MCF 10A (cell line): ENCODE measurements at regions of chr5 and their contacts with region 1.

Region 1: GRCh38 chr5:148730943-148731861 is 76.9 kb upstream of the HTR4 start:
- DNase-seq: peak; percentile 95
- H3K4me3 Mint-ChIP-seq: no peak overlapping the region
- H3K27ac Mint-ChIP-seq: peak overlapping the region; percentile 62
- H3K4me1 Mint-ChIP-seq: peaks cover 52% of the 10 kb centered on the region
- H3K27me3 Mint-ChIP-seq: no peaks in the 10 kb centered on the region
- CTCF ChIP-seq: peak; percentile 99

Region 2: GRCh38 chr5:148186248-148186996 is 544.8 kb before region 1 on chr5:
- CTCF ChIA-PET with region 1: interaction called, 12 read pairs
- POLR2A ChIA-PET with region 1: no interaction called
- intact Hi-C with region 1: no loop called
- DNase-seq: peak; percentile 94
- H3K4me3 Mint-ChIP-seq: no peak overlapping the region
- H3K27ac Mint-ChIP-seq: peak overlapping the region; percentile 75
- H3K4me1 Mint-ChIP-seq: peaks cover 7% of the 10 kb centered on the region
- H3K27me3 Mint-ChIP-seq: no peaks in the 10 kb centered on the region
- CTCF ChIP-seq: no peak

Region 3: GRCh38 chr5:148416921-148417320 is 314.3 kb before region 1 on chr5:
- CTCF ChIA-PET with region 1: interaction called, 75 read pairs
- POLR2A ChIA-PET with region 1: interaction called, 4 read pairs
- intact Hi-C with region 1: no loop called
- DNase-seq: peak; percentile 91
- H3K4me3 Mint-ChIP-seq: no peak overlapping the region
- H3K27ac Mint-ChIP-seq: peak overlapping the region; percentile 53
- H3K4me1 Mint-ChIP-seq: no peaks in the 10 kb centered on the region
- H3K27me3 Mint-ChIP-seq: no peaks in the 10 kb centered on the region
- CTCF ChIP-seq: no peak

Region 4: DNA sequence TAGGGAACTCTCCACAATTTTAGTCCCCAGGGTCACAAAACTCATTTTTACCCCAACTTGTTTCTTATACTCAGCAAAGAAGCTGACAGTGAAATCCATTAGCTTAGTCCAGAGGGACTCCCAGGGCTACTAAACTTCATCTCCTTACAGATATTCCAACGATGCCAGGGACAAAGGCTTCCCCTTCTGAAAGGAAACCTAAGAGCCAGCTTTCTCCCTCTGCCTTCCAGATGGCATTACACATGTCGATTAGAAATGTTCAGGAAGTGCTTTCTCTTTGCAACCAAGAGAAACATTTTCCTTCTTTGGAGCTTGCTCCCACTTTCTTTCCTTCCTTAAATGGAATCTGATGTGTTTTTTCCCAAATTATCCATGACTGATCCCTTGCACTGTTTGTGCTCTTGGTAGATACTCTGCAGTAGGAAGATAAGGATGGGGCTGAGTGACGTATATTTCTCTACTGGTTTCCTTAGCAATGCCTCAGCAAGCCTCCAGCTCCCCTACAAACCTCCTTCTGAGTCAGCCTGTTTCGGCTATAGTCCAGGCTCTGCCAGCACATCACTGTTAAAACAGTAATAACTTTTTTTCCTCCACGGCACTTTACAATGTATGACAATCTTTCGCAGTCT is 33.9 kb before region 1 on chr5:
- CTCF ChIA-PET with region 1: interaction called, 15 read pairs
- POLR2A ChIA-PET with region 1: no interaction called
- intact Hi-C with region 1: no loop called
- DNase-seq: peak; percentile 53
- H3K4me3 Mint-ChIP-seq: no peak overlapping the region
- H3K27ac Mint-ChIP-seq: no peak overlapping the region
- H3K4me1 Mint-ChIP-seq: no peaks in the 10 kb centered on the region
- H3K27me3 Mint-ChIP-seq: peaks cover 12% of the 10 kb centered on the region
- CTCF ChIP-seq: no peak

Region 5: GRCh38 chr5:148912714-148913398 is 181.7 kb after region 1 on chr5:
- CTCF ChIA-PET with region 1: interaction called, 26 read pairs
- POLR2A ChIA-PET with region 1: interaction called, 4 read pairs
- intact Hi-C with region 1: no loop called
- DNase-seq: peak; percentile 98
- H3K4me3 Mint-ChIP-seq: peak overlapping the region; percentile 1
- H3K27ac Mint-ChIP-seq: peak overlapping the region; percentile 76
- H3K4me1 Mint-ChIP-seq: peaks cover 68% of the 10 kb centered on the region
- H3K27me3 Mint-ChIP-seq: no peaks in the 10 kb centered on the region
- CTCF ChIP-seq: peak; percentile 75

Region 6: DNA sequence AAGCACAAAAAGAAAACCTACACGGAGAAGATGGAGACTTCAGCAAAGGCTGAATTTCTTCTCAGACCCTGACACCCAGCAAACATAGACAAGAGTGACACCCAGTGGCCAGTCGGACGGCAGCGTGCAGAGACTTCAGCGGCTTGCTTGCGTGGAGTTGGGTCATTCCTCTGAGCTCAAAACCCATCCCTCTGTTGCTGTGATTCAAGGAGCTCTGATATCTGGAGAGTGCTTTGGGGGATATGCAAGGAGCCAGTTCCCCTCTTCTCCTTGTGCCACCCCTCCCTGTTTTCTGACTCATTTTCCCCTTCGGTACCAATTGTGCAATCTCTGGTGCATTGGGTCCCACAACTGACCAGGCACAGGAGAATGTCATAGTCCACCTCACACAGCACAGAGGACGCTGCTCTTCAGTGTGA is 304.2 kb after region 1 on chr5:
- CTCF ChIA-PET with region 1: interaction called, 882 read pairs
- POLR2A ChIA-PET with region 1: interaction called, 5 read pairs
- intact Hi-C with region 1: loop called (anchors 1 kb)
- DNase-seq: peak; percentile 87
- H3K4me3 Mint-ChIP-seq: no peak overlapping the region
- H3K27ac Mint-ChIP-seq: no peak overlapping the region
- H3K4me1 Mint-ChIP-seq: peaks cover 17% of the 10 kb centered on the region
- H3K27me3 Mint-ChIP-seq: no peaks in the 10 kb centered on the region
- CTCF ChIP-seq: peak; percentile 96

Region 7: DNA sequence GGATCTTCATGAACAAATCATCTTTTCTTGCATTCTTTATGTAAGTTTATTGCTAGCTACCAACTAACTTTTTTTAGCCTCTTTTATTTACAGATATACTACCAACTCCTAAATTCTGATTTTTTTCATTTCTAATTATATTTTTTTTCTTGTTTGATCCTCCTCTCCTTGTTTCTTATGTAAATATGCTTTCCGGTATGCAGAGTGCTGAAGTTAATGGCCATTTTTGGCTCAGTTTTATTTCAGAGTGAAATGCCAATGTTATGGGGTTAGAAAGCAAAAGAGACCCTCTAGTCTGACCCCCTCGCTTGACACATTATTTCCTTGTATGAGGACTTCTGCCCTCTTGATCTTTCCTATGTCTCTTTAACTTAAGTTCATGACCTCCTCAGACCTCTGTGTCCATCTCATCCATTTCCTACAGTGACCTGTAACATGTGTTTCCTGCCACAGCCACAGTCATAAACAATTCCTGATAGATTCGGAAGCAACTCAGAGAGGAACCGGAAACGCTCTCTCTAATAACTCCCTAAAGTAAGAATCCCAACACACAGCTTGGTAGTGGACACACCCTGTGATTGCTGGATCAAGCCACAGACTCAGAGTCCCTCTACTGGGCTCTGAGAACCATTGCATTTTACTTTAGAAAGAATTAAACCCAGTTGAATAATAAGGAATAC is 497.6 kb after region 1 on chr5:
- CTCF ChIA-PET with region 1: interaction called, 13 read pairs
- POLR2A ChIA-PET with region 1: interaction called, 4 read pairs
- intact Hi-C with region 1: loop called (anchors 2 kb)
- DNase-seq: peak; percentile 84
- H3K4me3 Mint-ChIP-seq: peak overlapping the region; percentile 0
- H3K27ac Mint-ChIP-seq: peak overlapping the region; percentile 73
- H3K4me1 Mint-ChIP-seq: peaks cover 6% of the 10 kb centered on the region
- H3K27me3 Mint-ChIP-seq: no peaks in the 10 kb centered on the region
- CTCF ChIP-seq: peak; percentile 83

Region 8: GRCh38 chr5:149310947-149311658 is 579.9 kb after region 1 on chr5:
- CTCF ChIA-PET with region 1: no interaction called
- POLR2A ChIA-PET with region 1: no interaction called
- intact Hi-C with region 1: no loop called
- DNase-seq: peak; percentile 50
- H3K4me3 Mint-ChIP-seq: no peak overlapping the region
- H3K27ac Mint-ChIP-seq: no peak overlapping the region
- H3K4me1 Mint-ChIP-seq: peaks cover 5% of the 10 kb centered on the region
- H3K27me3 Mint-ChIP-seq: no peaks in the 10 kb centered on the region
- CTCF ChIP-seq: no peak